AG04450 (cell line): ENCODE measurements at regions of chr19 and their contacts with region 1.

Region 1: GRCh38 chr19:48510421-48511280 is 984 bp downstream of the LMTK3 start:
- DNase-seq: no peak
- H3K4me3 ChIP-seq: peak overlapping the region; percentile 39
- H3K27ac ChIP-seq: no peak overlapping the region
- H3K27me3 ChIP-seq: peaks cover 36% of the 10 kb centered on the region
- CTCF ChIP-seq: no peak

Region 2: GRCh38 chr19:48578891-48579290 is 68.2 kb after region 1 on chr19:
- CTCF ChIA-PET with region 1: interaction called, 207 read pairs
- POLR2A ChIA-PET with region 1: no interaction called
- DNase-seq: no peak
- H3K4me3 ChIP-seq: no peak overlapping the region
- H3K27ac ChIP-seq: no peak overlapping the region
- H3K27me3 ChIP-seq: no peaks in the 10 kb centered on the region
- CTCF ChIP-seq: no peak

Region 3: DNA sequence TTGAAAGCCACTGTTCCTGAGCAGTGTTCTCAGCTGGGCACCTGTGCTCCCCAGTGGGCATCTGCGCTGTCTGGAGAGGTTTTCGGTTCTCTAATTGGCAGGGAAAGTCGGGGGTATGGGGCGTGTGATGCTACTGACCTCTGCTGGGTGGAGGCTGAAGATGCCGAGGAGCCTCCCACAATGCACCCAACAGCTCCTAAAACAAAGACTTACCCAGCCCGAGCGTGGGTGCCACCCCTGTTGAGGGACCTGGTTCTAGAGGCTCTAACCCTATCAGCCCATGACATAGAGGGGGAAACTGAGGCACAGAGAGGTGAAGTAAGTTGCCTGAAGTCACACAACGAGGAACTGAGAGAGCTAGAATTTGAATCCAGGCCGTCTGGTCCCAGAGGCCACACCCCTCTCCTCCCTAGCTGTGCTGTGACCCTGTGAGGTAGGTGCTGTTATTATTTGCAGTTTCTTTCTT is 98.2 kb after region 1 on chr19:
- CTCF ChIA-PET with region 1: interaction called, 14 read pairs
- POLR2A ChIA-PET with region 1: no interaction called
- DNase-seq: no peak
- H3K4me3 ChIP-seq: no peak overlapping the region
- H3K27ac ChIP-seq: no peak overlapping the region
- H3K27me3 ChIP-seq: no peaks in the 10 kb centered on the region
- CTCF ChIP-seq: peak; percentile 62

Region 4: GRCh38 chr19:48705431-48705830 is 194.8 kb after region 1 on chr19:
- CTCF ChIA-PET with region 1: no interaction called
- POLR2A ChIA-PET with region 1: no interaction called
- DNase-seq: no peak
- H3K4me3 ChIP-seq: no peak overlapping the region
- H3K27ac ChIP-seq: no peak overlapping the region
- H3K27me3 ChIP-seq: no peaks in the 10 kb centered on the region
- CTCF ChIP-seq: no peak